Activated CD4-positive, alpha-beta T cell treated with anti-CD3 and anti-CD28 coated beads, Interleukin-2, amount 10 ng/mL, durations not matched to agents 24 days and 14 days (primary cell): ENCODE measurements at regions of chr5 and their contacts with region 1.

Region 1: GRCh38 chr5:112921833-112922817 is at the start of gene REEP5:
- DNase-seq: peak; percentile 96
- H3K4me3 Mint-ChIP-seq: peak within 1 kb of the TSS; percentile 99
- H3K27ac Mint-ChIP-seq: peak within 1 kb of the TSS; percentile 93
- H3K4me1 Mint-ChIP-seq: peaks cover 58% of the 10 kb centered on the region
- H3K27me3 Mint-ChIP-seq: no peaks in the 10 kb centered on the region
- total RNA-seq, gene REEP5: 74.4 and 75.3 TPM in 2 replicates

Region 2: GRCh38 chr5:112707187-112708102 is 214.7 kb before region 1 on chr5:
- intact Hi-C with region 1: loop called (anchors 5 kb)
- DNase-seq: peak; percentile 99
- H3K4me3 Mint-ChIP-seq: peak overlapping the region; percentile 96
- H3K27ac Mint-ChIP-seq: peak overlapping the region; percentile 86
- H3K4me1 Mint-ChIP-seq: peaks cover 38% of the 10 kb centered on the region
- H3K27me3 Mint-ChIP-seq: peaks cover 8% of the 10 kb centered on the region

Region 3: DNA sequence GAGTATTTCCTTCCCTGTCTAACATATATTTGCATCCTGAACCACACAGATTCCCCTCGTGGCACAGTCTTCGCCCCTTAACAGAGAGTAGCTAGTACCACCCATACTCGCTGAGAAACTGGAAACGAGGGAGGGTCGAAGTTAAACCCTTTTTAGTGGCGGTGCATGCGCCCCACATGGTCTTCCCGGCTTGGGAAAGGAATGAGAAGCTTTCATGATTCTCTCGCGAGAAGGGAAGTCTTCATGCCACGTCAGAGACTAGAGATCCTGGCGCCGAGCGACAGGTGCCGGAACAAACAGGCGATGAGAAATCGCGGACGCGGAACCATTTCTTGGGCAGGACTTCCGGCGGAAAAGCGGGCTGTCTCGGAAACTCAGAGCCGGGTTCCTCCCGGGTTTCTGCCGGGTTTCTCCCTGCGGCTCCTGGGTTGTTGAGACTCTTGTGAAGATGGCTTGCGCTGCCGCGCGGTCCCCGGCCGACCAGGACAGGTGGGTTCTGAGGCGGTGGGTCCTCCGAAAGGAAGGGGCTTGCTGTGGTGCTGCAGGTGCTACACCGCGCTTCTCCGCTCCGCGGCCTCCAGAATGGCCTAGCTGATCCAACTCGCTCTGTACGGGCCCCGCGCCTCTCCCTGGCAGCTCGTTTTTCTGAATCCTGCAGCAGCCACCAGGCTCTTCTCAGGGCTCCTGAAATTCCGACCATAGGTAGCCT is 61.0 kb before region 1 on chr5 and contains the start of gene SRP19:
- intact Hi-C with region 1: loop called (anchors 1 kb)
- DNase-seq: peak; percentile 98
- H3K4me3 Mint-ChIP-seq: peak within 1 kb of the TSS; percentile 95
- H3K27ac Mint-ChIP-seq: peak within 1 kb of the TSS; percentile 94
- H3K4me1 Mint-ChIP-seq: peaks cover 18% of the 10 kb centered on the region
- H3K27me3 Mint-ChIP-seq: peaks cover 17% of the 10 kb centered on the region
- total RNA-seq, gene SRP19: 67.4 and 74.3 TPM in 2 replicates

Region 4: DNA sequence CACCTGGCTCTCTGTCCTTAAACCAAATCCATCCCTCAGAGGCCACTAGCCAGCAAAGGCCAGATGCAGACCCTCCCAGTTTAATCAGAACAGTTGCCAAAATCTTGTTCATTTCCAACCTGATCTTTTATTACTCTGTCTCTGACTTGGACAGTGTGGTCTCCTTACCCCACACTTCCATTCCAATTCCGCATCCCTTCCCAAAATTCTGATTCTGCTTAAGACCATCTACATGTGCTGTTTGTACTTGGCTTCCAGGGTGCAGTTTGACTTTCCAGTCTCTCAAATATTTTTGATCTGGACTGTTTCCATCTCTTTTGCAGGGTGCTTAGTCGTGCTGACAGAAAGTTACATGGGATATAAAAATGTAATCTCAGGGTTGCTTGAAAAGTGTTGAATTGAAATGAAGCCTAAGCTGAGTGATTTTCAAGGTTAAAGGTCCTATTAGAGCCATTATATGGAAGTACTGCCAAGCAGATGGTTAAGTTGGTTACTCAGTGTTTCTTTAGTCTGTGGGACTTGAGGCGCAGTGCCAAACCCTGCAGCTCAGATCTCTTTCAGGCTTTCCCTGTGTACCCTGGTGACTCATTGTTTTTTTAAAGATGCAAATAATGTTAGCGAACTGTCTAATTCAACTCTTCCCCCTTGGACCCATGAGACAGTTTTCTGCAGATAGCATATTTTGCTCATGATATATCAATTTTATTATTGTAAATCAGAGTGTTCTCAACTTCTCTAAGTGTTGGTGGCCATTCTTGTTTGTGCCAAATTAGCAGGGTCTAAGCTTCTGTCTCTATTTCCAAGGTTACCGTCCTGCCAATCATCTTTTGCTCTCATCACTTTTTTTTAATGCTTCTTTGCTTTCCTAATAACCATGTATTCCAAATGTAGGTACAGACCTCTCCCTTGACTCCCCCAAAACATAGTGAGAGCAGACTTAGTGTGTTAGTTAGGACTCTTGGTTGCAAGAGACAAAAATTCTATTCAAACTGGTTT is 36.3 kb after region 1 on chr5:
- intact Hi-C with region 1: loop called (anchors 1 kb)
- DNase-seq: no peak
- H3K4me3 Mint-ChIP-seq: no peak overlapping the region
- H3K27ac Mint-ChIP-seq: peak overlapping the region; percentile 57
- H3K4me1 Mint-ChIP-seq: peaks cover 26% of the 10 kb centered on the region
- H3K27me3 Mint-ChIP-seq: peaks cover 6% of the 10 kb centered on the region

Region 5: GRCh38 chr5:113022661-113023060 is 100.5 kb after region 1 on chr5:
- intact Hi-C with region 1: loop called (anchors 5 kb)
- DNase-seq: peak; percentile 82
- H3K4me3 Mint-ChIP-seq: peak overlapping the region; percentile 59
- H3K27ac Mint-ChIP-seq: peak overlapping the region; percentile 75
- H3K4me1 Mint-ChIP-seq: peaks cover 48% of the 10 kb centered on the region
- H3K27me3 Mint-ChIP-seq: no peaks in the 10 kb centered on the region